HCT116 (cell line): ENCODE measurements at regions of chr3 and their contacts with region 1.

Region 1: GRCh38 chr3:120795017-120795648 is 52.6 kb downstream of the GTF2E1 start:
- DNase-seq: peak; percentile 61
- ATAC-seq: peak; percentile 97
- H3K4me3 ChIP-seq: no peak overlapping the region
- H3K27ac ChIP-seq: no peak overlapping the region
- H3K4me1 ChIP-seq: peaks cover 0 to 27% of the 10 kb centered on the region in 2 experiments; a peak in 2 of 4 replicates
- H3K27me3 ChIP-seq: no peaks in the 10 kb centered on the region
- CTCF ChIP-seq: peak; percentile 81 to 93 (median 89)
- POLR2A ChIP-seq: no peak
- RAD21 ChIP-seq: peak; percentile 93

Region 2: GRCh38 chr3:120536642-120537041 is 258.5 kb before region 1 on chr3:
- CTCF ChIA-PET with region 1: no interaction called
- POLR2A ChIA-PET with region 1: no interaction called
- RAD21 ChIA-PET with region 1: no interaction called
- intact Hi-C with region 1: no loop called
- DNase-seq: no peak
- ATAC-seq: no peak
- H3K4me3 ChIP-seq: no peak overlapping the region
- H3K27ac ChIP-seq: no peak overlapping the region
- H3K4me1 ChIP-seq: no peaks in the 10 kb centered on the region
- H3K27me3 ChIP-seq: no peaks in the 10 kb centered on the region
- CTCF ChIP-seq: no peak
- POLR2A ChIP-seq: no peak
- RAD21 ChIP-seq: no peak

Region 3: GRCh38 chr3:120558771-120559241 is 236.3 kb before region 1 on chr3:
- CTCF ChIA-PET with region 1: interaction called, 49 read pairs
- POLR2A ChIA-PET with region 1: no interaction called
- RAD21 ChIA-PET with region 1: no interaction called
- intact Hi-C with region 1: loop called (anchors 1 kb)
- DNase-seq: peak; percentile 76
- ATAC-seq: peak; percentile 62
- H3K4me3 ChIP-seq: peak overlapping the region; percentile 52 to 65
- H3K27ac ChIP-seq: peak overlapping the region; percentile 24; the same call in 1 of the 2 replicates
- H3K4me1 ChIP-seq: peaks cover 15 to 35% of the 10 kb centered on the region in 2 experiments
- H3K27me3 ChIP-seq: no peaks in the 10 kb centered on the region
- CTCF ChIP-seq: peak; percentile 83 to 95 (median 92)
- POLR2A ChIP-seq: no peak
- RAD21 ChIP-seq: peak; percentile 96

Region 4: DNA sequence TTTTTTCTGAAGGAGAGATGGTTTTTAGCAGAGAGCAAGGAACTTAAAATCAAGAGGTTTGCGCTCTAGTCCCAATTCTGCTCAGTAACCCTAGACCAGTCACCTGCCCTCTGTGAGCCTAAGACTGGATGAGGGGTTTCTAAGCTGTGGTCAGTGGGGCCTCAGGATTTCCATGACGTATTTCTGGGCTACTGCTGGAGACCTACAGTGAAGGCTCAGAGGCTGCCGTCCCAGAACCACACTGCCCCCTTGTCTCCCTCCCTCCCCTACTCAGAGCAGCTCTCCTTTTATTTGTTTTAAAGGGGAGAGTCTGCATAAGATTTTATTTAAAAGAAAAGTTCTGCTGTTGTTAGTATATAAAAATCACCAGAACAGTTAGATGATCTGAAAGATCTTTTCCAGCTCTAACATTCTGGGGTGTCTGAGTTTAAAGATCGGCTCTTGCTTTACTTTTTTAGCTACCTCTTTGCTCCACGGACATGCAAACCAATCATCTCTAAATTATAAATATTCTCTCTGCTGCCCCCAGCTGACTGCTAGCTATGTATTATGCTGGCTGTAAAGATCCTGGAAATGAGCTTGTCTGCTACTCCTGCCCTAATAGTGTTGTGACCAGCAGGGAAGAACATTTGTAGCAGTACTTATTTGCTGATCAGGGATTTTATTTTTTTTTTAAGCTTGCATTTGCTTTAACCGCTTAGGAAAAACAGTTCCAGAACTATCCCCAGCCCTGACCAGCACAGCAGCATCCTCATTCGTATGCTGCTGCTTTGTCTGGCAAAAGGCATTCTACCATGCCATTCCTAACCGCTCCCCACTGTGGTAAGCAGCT is 227.5 kb before region 1 on chr3:
- CTCF ChIA-PET with region 1: interaction called, 49 read pairs
- POLR2A ChIA-PET with region 1: no interaction called
- RAD21 ChIA-PET with region 1: interaction called in 1 of 2 experiments, 3 read pairs
- intact Hi-C with region 1: loop called (anchors 2 kb)
- DNase-seq: no peak
- ATAC-seq: peak; percentile 95
- H3K4me3 ChIP-seq: peak overlapping the region; percentile 8 to 15
- H3K27ac ChIP-seq: no peak overlapping the region
- H3K4me1 ChIP-seq: peaks cover 3 to 6% of the 10 kb centered on the region in 2 experiments; a peak in 3 of 4 replicates
- H3K27me3 ChIP-seq: no peaks in the 10 kb centered on the region
- CTCF ChIP-seq: peak; percentile 31 to 53 (median 43); a peak in 4 of 6 replicates
- POLR2A ChIP-seq: no peak
- RAD21 ChIP-seq: peak; percentile 46

Region 5: DNA sequence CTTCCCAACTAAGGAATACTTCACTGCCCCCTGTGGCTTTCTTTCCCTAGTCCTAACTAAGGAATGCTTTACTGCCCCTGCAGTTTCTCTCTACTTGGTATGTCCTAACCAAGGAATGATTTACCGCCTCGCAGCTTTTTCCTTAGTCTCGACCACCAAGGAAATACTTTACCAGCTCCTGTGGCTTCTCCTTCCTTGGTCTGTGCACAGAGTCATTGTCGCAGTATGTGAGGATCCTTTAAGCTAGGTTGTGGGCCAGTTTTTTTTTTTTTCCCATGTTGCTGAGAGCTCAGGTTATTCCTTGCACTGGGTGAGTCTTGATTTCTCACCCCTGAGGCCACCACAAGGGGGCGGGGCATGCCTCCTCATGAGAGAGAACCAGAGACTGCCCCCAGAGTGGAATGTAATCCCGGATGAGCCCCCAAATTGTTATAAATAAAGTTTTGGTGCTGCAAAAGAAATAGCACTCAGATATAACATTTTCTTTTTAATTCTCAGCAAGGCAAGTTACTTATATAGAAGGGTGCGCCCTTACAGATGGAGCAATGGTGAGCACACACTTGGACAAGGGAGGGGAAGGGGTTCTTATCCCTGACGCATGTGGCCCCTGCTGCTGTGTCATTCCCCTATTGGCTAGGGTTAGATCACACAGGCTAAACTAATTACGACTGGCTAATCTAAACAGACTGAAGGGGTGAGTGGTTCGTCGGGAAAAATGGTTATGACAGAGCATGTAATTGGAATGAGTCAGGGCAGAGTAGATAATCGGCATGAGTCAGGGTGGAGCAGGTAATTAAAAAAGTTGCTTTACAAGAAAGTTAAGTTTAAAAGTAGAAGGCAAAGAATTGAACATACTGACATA is 172.0 kb before region 1 on chr3:
- CTCF ChIA-PET with region 1: interaction called, 5 read pairs
- POLR2A ChIA-PET with region 1: no interaction called
- RAD21 ChIA-PET with region 1: interaction called in 1 of 2 experiments, 3 read pairs
- intact Hi-C with region 1: loop called (anchors 1 kb)
- DNase-seq: peak; percentile 93
- ATAC-seq: peak; percentile 85
- H3K4me3 ChIP-seq: peak overlapping the region; percentile 43 to 49
- H3K27ac ChIP-seq: peak overlapping the region; percentile 46
- H3K4me1 ChIP-seq: peaks cover 13 to 29% of the 10 kb centered on the region in 2 experiments
- H3K27me3 ChIP-seq: no peaks in the 10 kb centered on the region
- CTCF ChIP-seq: peak; percentile 56 to 71 (median 70); a peak in 5 of 6 replicates
- POLR2A ChIP-seq: no peak
- RAD21 ChIP-seq: peak; percentile 79

Region 6: DNA sequence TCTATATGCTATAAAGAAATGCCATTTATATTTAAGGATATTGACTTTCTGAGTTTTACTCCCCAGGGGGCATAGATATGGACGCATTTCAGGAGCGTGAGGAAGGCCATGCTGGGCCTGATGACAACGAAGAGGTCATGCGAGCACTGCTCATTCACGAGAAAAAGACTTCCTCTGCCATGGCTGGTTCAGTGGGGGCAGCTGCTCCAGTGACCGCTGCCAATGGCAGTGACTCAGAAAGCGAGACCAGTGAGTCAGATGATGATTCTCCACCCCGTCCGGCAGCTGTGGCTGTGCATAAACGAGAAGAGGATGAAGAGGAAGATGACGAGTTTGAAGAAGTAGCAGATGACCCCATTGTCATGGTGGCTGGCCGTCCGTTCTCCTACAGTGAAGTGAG is 14.2 kb before region 1 on chr3:
- CTCF ChIA-PET with region 1: interaction called, 14 read pairs
- POLR2A ChIA-PET with region 1: no interaction called
- RAD21 ChIA-PET with region 1: no interaction called
- intact Hi-C with region 1: no loop called
- DNase-seq: peak; percentile 36
- ATAC-seq: peak; percentile 94
- H3K4me3 ChIP-seq: no peak overlapping the region
- H3K27ac ChIP-seq: no peak overlapping the region
- H3K4me1 ChIP-seq: peaks cover 0 to 16% of the 10 kb centered on the region in 2 experiments; a peak in 2 of 4 replicates
- H3K27me3 ChIP-seq: no peaks in the 10 kb centered on the region
- CTCF ChIP-seq: no peak
- POLR2A ChIP-seq: no peak
- RAD21 ChIP-seq: no peak

Region 7: DNA sequence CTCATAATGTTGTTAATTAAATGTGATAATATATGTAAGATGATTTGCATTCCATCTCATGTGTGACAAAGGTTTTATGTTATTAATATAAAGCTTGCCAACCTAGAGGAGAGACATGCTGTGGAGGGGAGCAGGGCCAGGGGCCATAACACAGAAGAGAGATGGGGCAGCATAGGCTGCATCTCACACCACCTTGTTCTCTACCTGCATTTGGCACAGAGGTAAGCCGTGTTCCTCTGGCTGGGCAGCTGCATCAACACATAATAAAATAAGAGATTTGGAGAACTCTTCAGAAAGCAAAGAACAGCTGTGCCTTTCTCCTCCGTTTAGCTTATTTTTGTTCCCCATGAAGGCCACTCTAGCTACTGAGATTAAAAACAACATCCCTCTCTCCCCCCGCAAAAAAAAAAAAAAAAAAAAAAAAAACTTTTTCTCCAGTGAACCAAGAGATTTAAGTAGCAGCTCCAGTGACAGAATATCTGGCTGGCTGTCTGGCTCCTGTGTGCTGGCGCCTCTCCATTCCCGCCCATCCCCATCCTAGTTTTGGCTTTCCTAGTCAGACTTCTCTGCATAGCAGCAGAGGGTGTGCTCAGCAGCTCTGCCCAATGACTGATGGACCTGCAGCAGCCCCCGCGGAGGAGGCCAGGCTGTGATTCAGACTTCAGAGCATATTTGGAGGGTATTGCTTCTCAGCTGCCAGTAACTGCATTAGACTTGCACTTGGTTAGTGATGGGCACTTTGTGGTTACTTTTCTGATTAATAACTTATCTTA is 60.7 kb after region 1 on chr3:
- CTCF ChIA-PET with region 1: no interaction called
- POLR2A ChIA-PET with region 1: no interaction called
- RAD21 ChIA-PET with region 1: no interaction called
- intact Hi-C with region 1: no loop called
- DNase-seq: no peak
- ATAC-seq: no peak
- H3K4me3 ChIP-seq: no peak overlapping the region
- H3K27ac ChIP-seq: no peak overlapping the region
- H3K4me1 ChIP-seq: no peaks in the 10 kb centered on the region
- H3K27me3 ChIP-seq: no peaks in the 10 kb centered on the region
- CTCF ChIP-seq: no peak
- POLR2A ChIP-seq: no peak
- RAD21 ChIP-seq: no peak